Body of pancreas (tissue), 4 donors: ENCODE measurements at regions of chr15 and their contacts with region 1.

Region 1: DNA sequence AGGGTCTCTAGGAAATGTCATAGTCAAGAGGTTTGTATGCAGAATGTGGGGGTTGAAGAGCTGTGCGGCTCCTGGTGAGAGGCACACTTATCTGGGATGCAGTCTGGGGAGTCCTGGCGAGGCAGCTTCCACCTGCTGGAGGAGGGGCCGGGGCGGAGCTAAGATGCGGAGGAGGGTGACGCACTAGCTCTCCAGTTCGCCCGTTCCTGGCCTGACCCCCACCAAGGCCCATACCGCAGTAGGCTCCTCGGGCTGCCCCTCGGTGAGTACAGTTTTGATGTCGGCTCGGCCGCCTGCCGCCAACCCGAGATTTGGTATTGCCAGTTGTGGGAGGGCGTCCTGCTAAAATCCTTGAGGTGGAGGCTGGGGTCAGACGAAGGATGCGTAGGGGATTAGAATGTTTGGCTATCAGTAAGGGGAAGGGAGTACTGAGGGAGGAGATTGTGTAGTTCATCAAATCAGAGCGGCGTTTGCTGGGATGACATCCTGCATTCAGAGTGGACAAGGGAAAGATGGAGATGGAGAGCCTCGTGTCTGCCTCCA is at the start of gene SCG5:
- DNase-seq: peak in 3 of 4 donors; percentile 54 to 62 (median 57)
- ATAC-seq: peak; percentile 40
- H3K4me3 ChIP-seq: no peak within 1 kb of the TSS
- H3K27ac ChIP-seq: no peak within 1 kb of the TSS
- H3K4me1 ChIP-seq: peaks cover 9% of the 10 kb centered on the region
- H3K27me3 ChIP-seq: no peaks in the 10 kb centered on the region
- CTCF ChIP-seq: no peak
- POLR2A ChIP-seq: peak in 2 of 3 donors; percentile 28 to 58
- total RNA-seq, gene SCG5: 49.4 to 50.1 TPM

Region 2: DNA sequence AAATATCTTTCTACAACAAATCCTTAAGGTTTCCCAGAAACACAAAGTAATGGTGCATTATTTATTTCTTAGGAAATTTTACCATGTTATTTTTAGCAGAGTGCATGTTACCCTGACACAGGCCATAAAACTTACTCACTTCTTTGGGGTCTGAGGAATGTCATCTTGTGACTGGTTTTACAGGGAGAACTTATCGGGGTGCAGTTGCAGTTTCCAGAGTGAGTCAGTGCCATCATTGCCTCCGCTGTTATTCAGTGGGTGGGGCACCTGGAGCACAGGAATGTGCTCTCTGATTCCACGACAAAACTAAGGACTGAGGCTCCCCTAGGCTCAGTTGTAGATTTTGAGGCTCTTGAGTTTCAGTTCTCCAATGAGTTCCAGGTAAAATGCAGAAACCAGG is 65.1 kb after region 1 on chr15:
- intact Hi-C with region 1: loop called (anchors 10 kb)
- DNase-seq: no peak
- ATAC-seq: no peak
- H3K4me3 ChIP-seq: no peak overlapping the region
- H3K27ac ChIP-seq: no peak overlapping the region
- H3K4me1 ChIP-seq: peaks cover 11% of the 10 kb centered on the region
- H3K27me3 ChIP-seq: no peaks in the 10 kb centered on the region
- CTCF ChIP-seq: no peak
- POLR2A ChIP-seq: no peak